Caco-2 (cell line): ENCODE measurements at regions of chr3 and their contacts with region 1.

Region 1: GRCh38 chr3:192130534-192131132 is 596.7 kb downstream of the FGF12 start:
- DNase-seq: peak; percentile 43 to 58
- H3K4me3 ChIP-seq: no peak overlapping the region
- H3K4me3 Mint-ChIP-seq: no peak overlapping the region
- H3K27ac Mint-ChIP-seq: no peak overlapping the region
- H3K4me1 ChIP-seq: peaks cover 6% of the 10 kb centered on the region; the same call in 1 of the 2 replicates
- H3K4me1 Mint-ChIP-seq: no peaks in the 10 kb centered on the region
- H3K27me3 ChIP-seq: no peaks in the 10 kb centered on the region
- H3K27me3 Mint-ChIP-seq: no peaks in the 10 kb centered on the region
- CTCF ChIP-seq: peak; percentile 65 to 72

Region 2: DNA sequence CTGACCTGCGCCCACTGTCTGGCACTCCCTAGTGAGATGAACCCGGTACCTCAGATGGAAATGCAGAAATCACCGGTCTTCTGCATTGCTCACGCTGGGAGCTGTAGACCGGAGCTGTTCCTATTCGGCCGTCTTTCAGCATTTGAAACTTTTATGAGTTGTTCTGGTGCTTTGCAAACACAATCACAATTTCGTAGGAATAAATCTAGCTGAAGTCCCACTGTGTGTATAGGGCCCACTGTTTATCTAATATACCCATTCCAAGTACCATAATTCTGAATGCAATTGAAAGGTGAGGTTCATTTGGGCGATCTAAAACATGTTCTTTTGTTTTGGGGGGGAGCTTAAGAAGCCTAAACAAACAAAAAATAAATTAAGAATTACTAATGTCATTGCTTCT is 24.6 kb after region 1 on chr3:
- CTCF ChIA-PET with region 1: no interaction called
- POLR2A ChIA-PET with region 1: no interaction called
- intact Hi-C with region 1: no loop called
- DNase-seq: no peak
- H3K4me3 ChIP-seq: peak overlapping the region; percentile 18
- H3K4me3 Mint-ChIP-seq: peak overlapping the region; percentile 47
- H3K27ac Mint-ChIP-seq: no peak overlapping the region
- H3K4me1 ChIP-seq: no peaks in the 10 kb centered on the region
- H3K4me1 Mint-ChIP-seq: peaks cover 6% of the 10 kb centered on the region
- H3K27me3 ChIP-seq: no peaks in the 10 kb centered on the region
- H3K27me3 Mint-ChIP-seq: peaks cover 3% of the 10 kb centered on the region
- CTCF ChIP-seq: no peak

Region 3: DNA sequence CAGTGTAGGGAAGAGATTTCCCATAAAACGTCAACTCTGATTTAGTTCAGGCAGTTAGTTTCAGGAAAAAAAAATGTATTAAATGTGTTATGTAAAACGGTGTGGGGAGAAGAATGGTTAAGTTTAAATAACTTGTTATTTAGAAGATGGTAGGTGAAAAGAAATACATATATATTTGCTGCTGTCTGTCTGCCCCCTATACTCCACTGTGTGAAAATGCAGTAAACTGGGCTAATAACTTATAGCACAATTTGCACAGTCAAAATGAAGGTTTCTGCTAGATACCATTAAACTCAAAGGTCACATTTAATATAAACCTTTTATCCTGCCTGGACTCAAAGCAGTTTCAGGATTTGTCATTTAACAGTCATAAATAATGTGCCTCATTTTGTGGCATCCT is 81.7 kb after region 1 on chr3:
- CTCF ChIA-PET with region 1: no interaction called
- POLR2A ChIA-PET with region 1: no interaction called
- intact Hi-C with region 1: loop called (anchors 5 kb)
- DNase-seq: no peak
- H3K4me3 ChIP-seq: no peak overlapping the region
- H3K4me3 Mint-ChIP-seq: no peak overlapping the region
- H3K27ac Mint-ChIP-seq: no peak overlapping the region
- H3K4me1 ChIP-seq: no peaks in the 10 kb centered on the region
- H3K4me1 Mint-ChIP-seq: peaks cover 13% of the 10 kb centered on the region
- H3K27me3 ChIP-seq: no peaks in the 10 kb centered on the region
- H3K27me3 Mint-ChIP-seq: no peaks in the 10 kb centered on the region
- CTCF ChIP-seq: peak in 1 of 2 experiments; percentile 15

Region 4: DNA sequence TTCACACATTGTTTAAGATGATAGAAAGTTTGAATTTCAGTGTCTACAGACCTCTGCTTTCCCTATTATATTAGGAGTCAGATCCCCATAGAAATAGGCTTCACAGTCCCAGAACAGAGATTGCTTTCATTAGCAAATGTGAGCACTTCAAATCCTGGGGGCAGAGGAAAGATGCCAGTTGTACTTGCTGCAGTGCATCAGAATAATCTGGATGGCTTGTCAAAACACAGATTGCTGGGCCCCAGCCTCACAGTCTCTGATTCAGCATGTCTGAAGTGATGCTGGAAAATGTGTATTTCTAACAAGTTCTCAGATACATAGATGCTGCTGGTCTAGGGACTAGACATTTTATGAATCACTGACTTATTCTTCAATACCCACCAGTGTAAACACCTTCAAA is 221.5 kb after region 1 on chr3:
- CTCF ChIA-PET with region 1: no interaction called
- POLR2A ChIA-PET with region 1: no interaction called
- intact Hi-C with region 1: no loop called
- DNase-seq: no peak
- H3K4me3 ChIP-seq: no peak overlapping the region
- H3K4me3 Mint-ChIP-seq: no peak overlapping the region
- H3K27ac Mint-ChIP-seq: no peak overlapping the region
- H3K4me1 ChIP-seq: no peaks in the 10 kb centered on the region
- H3K4me1 Mint-ChIP-seq: no peaks in the 10 kb centered on the region
- H3K27me3 ChIP-seq: no peaks in the 10 kb centered on the region; the same call in 1 of the 2 replicates
- H3K27me3 Mint-ChIP-seq: no peaks in the 10 kb centered on the region
- CTCF ChIP-seq: no peak